Activated naive CD4-positive, alpha-beta T cell treated with anti-CD3 and anti-CD28 coated beads for 36 hours (primary cell): ENCODE measurements at regions of chr14 and their contacts with region 1.

Region 1: GRCh38 chr14:64636208-64636979 is 67.8 kb upstream of the PLEKHG3 start:
- DNase-seq: peak; percentile 81
- H3K4me3 Mint-ChIP-seq: no peak overlapping the region
- H3K27ac Mint-ChIP-seq: no peak overlapping the region
- H3K4me1 Mint-ChIP-seq: no peaks in the 10 kb centered on the region
- H3K27me3 Mint-ChIP-seq: no peaks in the 10 kb centered on the region

Region 2: DNA sequence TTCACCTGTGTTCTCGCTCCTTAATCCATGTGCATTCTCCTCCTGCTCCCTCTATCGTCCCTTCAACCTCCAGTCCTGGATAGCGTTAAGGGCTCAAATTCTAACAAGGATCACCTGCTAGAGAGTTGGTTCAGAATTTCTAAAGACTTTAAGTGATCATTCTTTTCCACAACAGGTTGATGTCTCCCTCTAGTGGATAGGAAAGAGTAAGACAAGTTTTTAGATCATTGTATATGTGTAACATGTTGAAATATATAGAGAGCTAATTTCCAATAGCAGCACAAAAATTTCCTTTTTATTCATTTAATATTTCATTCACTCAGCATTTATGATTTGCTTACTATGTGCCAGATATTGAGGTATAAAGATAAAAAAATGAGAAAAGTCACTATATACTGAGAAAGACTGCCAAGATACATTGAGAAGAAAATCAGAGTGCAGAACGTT is 332.9 kb before region 1 on chr14:
- CTCF ChIA-PET with region 1: no interaction called
- intact Hi-C with region 1: no loop called
- DNase-seq: no peak
- H3K4me3 Mint-ChIP-seq: no peak overlapping the region
- H3K27ac Mint-ChIP-seq: no peak overlapping the region
- H3K4me1 Mint-ChIP-seq: peaks cover 2% of the 10 kb centered on the region
- H3K27me3 Mint-ChIP-seq: peaks cover 7% of the 10 kb centered on the region

Region 3: GRCh38 chr14:64338616-64339316 is 297.6 kb before region 1 on chr14:
- CTCF ChIA-PET with region 1: interaction called, 28 read pairs
- intact Hi-C with region 1: no loop called
- DNase-seq: peak; percentile 95
- H3K4me3 Mint-ChIP-seq: peak overlapping the region; percentile 92
- H3K27ac Mint-ChIP-seq: peak overlapping the region; percentile 86
- H3K4me1 Mint-ChIP-seq: peaks cover 19% of the 10 kb centered on the region
- H3K27me3 Mint-ChIP-seq: no peaks in the 10 kb centered on the region

Region 4: DNA sequence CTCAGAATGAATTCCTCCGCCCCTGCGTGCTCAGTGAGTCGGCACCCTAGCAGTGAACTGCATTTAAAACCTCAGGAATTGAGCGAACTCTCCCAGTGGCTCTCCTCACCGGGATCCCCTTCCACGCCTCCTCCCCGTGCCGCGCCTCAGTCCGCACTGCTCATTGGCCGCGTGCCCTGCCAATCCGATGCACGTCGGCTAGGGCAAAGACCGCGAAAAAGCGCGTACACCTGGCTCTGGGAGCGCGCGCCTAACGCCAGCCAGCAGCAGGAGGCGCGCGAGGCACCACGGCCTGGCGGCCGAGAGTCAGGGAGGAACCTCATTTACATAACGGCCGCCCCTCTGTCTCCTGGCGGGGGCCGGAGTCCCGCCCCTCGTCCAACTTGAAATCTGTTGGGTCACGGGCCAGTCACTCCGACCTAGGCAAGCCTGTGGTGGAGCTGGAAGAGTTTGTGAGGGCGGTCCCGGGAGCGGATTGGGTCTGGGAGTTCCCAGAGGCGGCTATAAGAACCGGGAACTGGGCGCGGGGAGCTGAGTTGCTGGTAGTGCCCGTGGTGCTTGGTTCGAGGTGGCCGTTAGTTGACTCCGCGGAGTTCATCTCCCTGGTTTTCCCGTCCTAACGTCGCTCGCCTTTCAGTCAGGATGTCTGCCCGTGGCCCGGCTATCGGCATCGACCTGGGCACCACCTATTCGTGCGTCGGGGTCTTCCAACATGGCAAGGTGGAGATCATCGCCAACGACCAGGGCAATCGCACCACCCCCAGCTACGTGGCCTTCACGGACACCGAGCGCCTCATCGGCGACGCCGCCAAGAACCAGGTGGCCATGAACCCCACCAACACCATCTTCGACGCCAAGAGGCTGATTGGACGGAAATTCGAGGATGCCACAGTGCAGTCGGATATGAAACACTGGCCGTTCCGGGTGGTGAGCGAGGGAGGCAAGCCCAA is 95.9 kb before region 1 on chr14 and contains the start of gene HSPA2:
- CTCF ChIA-PET with region 1: interaction called, 14 read pairs
- intact Hi-C with region 1: loop called (anchors 1 kb)
- DNase-seq: peak; percentile 97
- H3K4me3 Mint-ChIP-seq: peak within 1 kb of the TSS; percentile 92
- H3K27ac Mint-ChIP-seq: peak within 1 kb of the TSS; percentile 83
- H3K4me1 Mint-ChIP-seq: peaks cover 30% of the 10 kb centered on the region
- H3K27me3 Mint-ChIP-seq: peaks cover 22% of the 10 kb centered on the region
- total RNA-seq, gene HSPA2: 4.1 to 5.1 TPM

Region 5: GRCh38 chr14:64614805-64615391 is 21.5 kb before region 1 on chr14:
- CTCF ChIA-PET with region 1: interaction called, 15 read pairs
- intact Hi-C with region 1: no loop called
- DNase-seq: no peak
- H3K4me3 Mint-ChIP-seq: no peak overlapping the region
- H3K27ac Mint-ChIP-seq: no peak overlapping the region
- H3K4me1 Mint-ChIP-seq: no peaks in the 10 kb centered on the region
- H3K27me3 Mint-ChIP-seq: no peaks in the 10 kb centered on the region

Region 6: DNA sequence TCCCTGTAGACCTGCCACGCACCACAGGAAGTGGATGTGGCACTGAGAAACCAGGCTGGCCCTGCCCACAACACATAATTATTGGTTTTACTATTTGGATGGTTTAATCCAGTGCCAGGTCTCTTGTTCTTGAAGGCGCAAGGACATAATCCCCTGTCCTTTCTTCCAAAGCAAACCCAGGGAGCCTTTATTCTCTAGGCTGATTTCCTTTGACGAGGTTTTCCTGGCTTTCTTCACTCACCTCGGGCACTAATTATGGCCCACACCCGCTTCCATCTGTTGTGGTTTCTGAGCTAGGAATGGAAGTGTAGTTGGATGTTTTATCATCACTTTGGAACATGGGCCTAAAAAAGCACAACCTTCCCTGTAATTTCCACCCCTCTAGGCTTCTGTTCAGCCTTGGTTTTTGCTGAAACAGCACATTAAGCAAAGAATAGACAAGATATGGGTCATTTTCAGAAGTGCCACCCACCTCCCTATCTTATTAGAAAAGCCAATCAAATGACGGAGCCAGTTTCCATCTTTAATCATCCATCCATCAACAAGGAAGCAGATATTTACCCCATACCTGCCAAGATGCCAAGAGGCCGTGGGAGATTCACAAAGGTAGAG is 12.7 kb before region 1 on chr14:
- CTCF ChIA-PET with region 1: interaction called, 15 read pairs
- intact Hi-C with region 1: no loop called
- DNase-seq: no peak
- H3K4me3 Mint-ChIP-seq: no peak overlapping the region
- H3K27ac Mint-ChIP-seq: no peak overlapping the region
- H3K4me1 Mint-ChIP-seq: no peaks in the 10 kb centered on the region
- H3K27me3 Mint-ChIP-seq: no peaks in the 10 kb centered on the region

Region 7: GRCh38 chr14:64654246-64654900 is 18.0 kb after region 1 on chr14:
- CTCF ChIA-PET with region 1: interaction called, 17 read pairs
- intact Hi-C with region 1: no loop called
- DNase-seq: peak; percentile 38
- H3K4me3 Mint-ChIP-seq: no peak overlapping the region
- H3K27ac Mint-ChIP-seq: no peak overlapping the region
- H3K4me1 Mint-ChIP-seq: peaks cover 15% of the 10 kb centered on the region
- H3K27me3 Mint-ChIP-seq: peaks cover 22% of the 10 kb centered on the region